PC-3 (cell line): ENCODE measurements at regions of chrX and their contacts with region 1.

Region 1: GRCh38 chrX:16123222-16123786 is at the start of gene GRPR:
- DNase-seq: peak; percentile 95
- ATAC-seq: peak; percentile 85
- H3K4me3 ChIP-seq: peak within 1 kb of the TSS; percentile 81
- H3K27ac ChIP-seq: no peak within 1 kb of the TSS; the same call in 1 of the 2 replicates
- H3K4me1 ChIP-seq: peaks cover 15% of the 10 kb centered on the region
- H3K27me3 ChIP-seq: no peaks in the 10 kb centered on the region
- CTCF ChIP-seq: peak; percentile 87
- total RNA-seq, gene GRPR: 22.5 and 26.5 TPM in 2 replicates

Region 2: DNA sequence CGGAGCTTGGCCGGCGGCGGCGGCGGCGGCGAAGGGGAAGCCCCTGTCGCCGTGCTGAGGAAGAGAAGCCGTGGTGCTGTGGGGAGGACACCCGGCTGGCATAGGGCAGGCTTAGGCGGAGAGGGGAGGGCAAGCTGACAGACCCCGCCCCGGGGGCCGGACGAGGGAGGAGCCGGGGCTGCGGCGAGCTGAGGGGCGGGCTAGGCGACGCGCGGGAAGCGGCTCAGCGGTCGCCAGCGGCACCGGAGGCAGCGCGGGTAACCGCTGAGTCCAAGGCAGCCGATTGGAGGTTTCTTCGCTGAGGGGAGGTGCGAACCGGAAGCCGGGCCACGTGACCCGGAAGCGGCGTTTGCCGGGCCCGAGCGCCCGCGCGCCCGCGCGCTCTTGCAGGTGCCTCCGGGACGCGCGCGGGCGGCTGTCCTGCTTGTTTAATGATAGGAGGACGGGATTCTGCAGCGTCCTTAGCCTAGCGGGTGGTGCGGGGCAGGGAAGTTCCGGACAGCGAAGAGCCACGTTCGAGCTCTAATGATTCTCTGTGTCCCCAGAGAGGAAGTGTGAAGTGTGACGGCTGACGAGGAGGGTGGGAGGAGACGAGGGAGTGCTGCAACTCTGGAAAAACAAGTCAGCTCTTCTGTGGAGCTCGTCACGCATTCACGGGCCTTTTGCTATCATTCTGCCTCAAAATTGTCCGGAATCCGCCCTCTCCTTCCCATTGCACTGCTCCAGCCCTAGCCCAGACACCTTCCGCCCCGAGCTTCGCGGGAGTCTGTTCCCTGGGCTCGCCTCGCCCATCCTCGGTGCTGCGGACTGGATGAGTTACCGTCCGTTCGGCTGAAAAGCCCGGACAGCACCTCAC is 268.4 kb before region 1 on chrX and contains the start of gene AP1S2:
- CTCF ChIA-PET with region 1: no interaction called
- POLR2A ChIA-PET with region 1: no interaction called
- intact Hi-C with region 1: loop called (anchors 10 kb)
- DNase-seq: peak; percentile 93
- ATAC-seq: peak; percentile 92
- H3K4me3 ChIP-seq: peak within 1 kb of the TSS; percentile 80
- H3K27ac ChIP-seq: peak within 1 kb of the TSS; percentile 70
- H3K4me1 ChIP-seq: peaks cover 36% of the 10 kb centered on the region
- H3K27me3 ChIP-seq: no peaks in the 10 kb centered on the region
- CTCF ChIP-seq: no peak
- total RNA-seq, gene AP1S2: 28.2 and 28.3 TPM in 2 replicates

Region 3: DNA sequence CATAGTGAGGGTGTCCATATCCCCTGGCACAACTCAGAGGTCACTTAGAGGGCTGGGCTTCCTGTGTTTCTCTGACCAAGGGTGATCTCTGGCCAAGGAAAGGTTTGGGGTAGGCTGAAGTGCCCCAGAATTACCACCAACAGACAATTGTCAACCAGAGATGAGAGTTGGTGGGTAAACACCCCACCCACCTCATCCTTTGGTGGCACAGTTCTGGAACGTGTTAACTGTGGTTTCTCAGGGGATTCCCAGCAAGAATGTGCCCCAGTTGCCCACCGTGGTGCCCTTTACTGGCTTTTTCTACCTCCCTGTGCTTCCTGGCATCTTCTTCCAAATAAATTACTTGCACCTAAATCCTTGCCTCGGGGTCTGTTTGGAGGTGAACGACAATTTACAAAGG is 17.1 kb after region 1 on chrX:
- CTCF ChIA-PET with region 1: interaction called, 4 read pairs
- POLR2A ChIA-PET with region 1: interaction called, 4 read pairs
- intact Hi-C with region 1: loop called (anchors 1 kb)
- DNase-seq: no peak
- ATAC-seq: peak; percentile 37
- H3K4me3 ChIP-seq: peak overlapping the region; percentile 37
- H3K27ac ChIP-seq: peak overlapping the region; percentile 87
- H3K4me1 ChIP-seq: peaks cover 29% of the 10 kb centered on the region
- H3K27me3 ChIP-seq: no peaks in the 10 kb centered on the region
- CTCF ChIP-seq: no peak

Region 4: GRCh38 chrX:16185725-16186136 is 62.4 kb after region 1 on chrX:
- CTCF ChIA-PET with region 1: interaction called, 3 read pairs
- POLR2A ChIA-PET with region 1: no interaction called
- intact Hi-C with region 1: loop called (anchors 2 kb)
- DNase-seq: peak; percentile 90
- ATAC-seq: peak; percentile 96
- H3K4me3 ChIP-seq: no peak overlapping the region
- H3K27ac ChIP-seq: peak overlapping the region; percentile 84
- H3K4me1 ChIP-seq: peaks cover 39% of the 10 kb centered on the region
- H3K27me3 ChIP-seq: no peaks in the 10 kb centered on the region
- CTCF ChIP-seq: no peak

Region 5: GRCh38 chrX:16436348-16437188 is 313.3 kb after region 1 on chrX:
- CTCF ChIA-PET with region 1: interaction called, 3 read pairs
- POLR2A ChIA-PET with region 1: no interaction called
- intact Hi-C with region 1: loop called (anchors 5 kb)
- DNase-seq: peak; percentile 91
- ATAC-seq: peak; percentile 95
- H3K4me3 ChIP-seq: no peak overlapping the region
- H3K27ac ChIP-seq: 0 out of 2 replicates have a peak overlapping the region, but pooled peaks have one; percentile 20
- H3K4me1 ChIP-seq: peaks cover 3% of the 10 kb centered on the region; the same call in 1 of the 2 replicates
- H3K27me3 ChIP-seq: no peaks in the 10 kb centered on the region
- CTCF ChIP-seq: peak; percentile 81

Region 6: DNA sequence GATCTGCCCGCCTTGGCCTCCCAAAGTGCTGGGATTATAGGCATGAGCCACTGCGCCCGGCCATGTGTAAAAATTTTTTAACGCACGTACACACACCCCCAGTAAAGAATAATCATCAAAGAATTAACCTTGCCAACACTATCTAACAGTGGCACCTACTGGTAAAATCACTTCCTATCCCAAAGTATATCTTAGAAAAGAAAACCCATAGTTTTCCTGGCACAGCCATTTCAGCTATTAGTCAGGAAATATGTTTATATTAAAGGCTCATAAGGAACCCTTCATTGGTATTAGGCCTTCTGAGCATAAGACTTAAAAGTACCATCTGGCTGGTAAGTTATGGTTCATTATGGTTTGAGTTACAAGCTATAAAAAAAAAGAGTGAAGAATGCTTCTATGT is 540.8 kb after region 1 on chrX:
- CTCF ChIA-PET with region 1: interaction called, 3 read pairs
- POLR2A ChIA-PET with region 1: no interaction called
- intact Hi-C with region 1: loop called (anchors 1 kb)
- DNase-seq: peak; percentile 60
- ATAC-seq: peak; percentile 66
- H3K4me3 ChIP-seq: no peak overlapping the region
- H3K27ac ChIP-seq: peak overlapping the region; percentile 38
- H3K4me1 ChIP-seq: peaks cover 48% of the 10 kb centered on the region
- H3K27me3 ChIP-seq: no peaks in the 10 kb centered on the region
- CTCF ChIP-seq: peak; percentile 46